Esophagus muscularis mucosa (tissue), 4 donors: ENCODE measurements at regions of chr7 and their contacts with region 1.

Region 1: DNA sequence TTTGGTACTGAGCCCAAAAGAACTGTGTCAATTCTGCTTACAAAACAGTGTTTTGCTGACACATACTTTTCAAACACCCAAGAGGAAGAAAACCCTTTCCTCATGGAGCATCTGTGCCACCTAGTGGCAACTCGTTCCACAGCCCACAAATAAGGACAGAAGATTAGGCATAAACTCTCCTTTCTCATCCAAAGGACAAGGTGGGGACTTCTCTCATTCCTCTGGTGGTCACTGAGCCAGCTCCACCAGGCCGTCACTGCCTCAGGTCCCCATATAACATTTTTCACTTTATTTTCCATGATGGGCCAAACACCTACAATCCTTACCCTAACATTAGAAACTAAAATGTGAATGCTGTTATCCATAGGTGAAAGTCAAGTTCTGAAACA is 76.9 kb downstream of the RNF216 start:
- DNase-seq: peak; percentile 95
- H3K4me3 ChIP-seq: no peak overlapping the region
- H3K27ac ChIP-seq: peak overlapping the region; percentile 91 to 96 (median 92)
- H3K4me1 ChIP-seq: peaks cover 48 to 52% (median 50%) of the 10 kb centered on the region in 4 donors
- H3K27me3 ChIP-seq: no peaks in the 10 kb centered on the region
- CTCF ChIP-seq: peak in 2 of 3 experiments; percentile 93 to 96
- EP300 ChIP-seq: no peak
- POLR2A ChIP-seq: no peak

Region 2: DNA sequence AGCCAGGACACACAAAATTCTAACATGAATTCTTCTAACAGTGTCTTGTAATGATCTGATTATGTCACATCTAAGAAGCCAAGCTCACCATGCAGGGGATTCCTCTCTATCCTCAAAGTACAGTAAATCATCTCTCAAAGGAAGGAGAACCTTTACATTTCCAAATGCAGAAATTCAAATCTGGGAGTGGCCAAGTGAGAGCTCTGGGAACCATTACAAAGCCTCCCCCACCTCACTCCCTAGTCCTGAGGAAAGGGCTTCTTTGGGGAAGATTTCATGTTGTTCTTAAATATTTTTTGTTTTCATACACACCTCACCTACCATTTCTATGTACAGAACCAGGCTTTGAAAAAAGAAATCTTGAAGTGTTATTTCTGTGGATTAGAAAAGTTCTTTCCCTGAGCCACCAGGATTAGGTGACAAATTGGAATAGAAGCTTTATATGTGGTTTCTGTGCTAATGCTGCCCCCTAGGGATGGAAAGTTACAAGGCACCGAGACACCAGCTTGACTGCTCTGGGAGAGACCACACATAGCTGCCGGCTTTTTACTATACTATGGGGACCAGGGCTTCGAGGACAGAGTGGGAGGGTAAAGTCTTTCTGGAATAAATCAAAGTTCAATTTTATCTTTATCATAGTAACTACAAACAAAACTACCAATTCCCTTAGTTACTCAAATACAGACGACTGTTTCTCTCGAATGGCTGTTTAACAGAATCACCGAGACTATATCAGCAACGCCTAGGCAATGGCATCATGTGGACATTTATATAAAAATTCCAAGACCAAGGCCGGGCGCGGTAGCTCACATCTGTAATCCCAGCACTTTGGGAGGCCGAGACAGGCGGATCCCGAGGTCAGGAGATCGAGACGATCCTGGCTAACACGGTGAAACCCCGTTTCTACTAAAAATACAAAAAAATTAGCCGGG is 39.2 kb before region 1 on chr7:
- intact Hi-C with region 1: loop called (anchors 5 kb)
- DNase-seq: peak; percentile 96
- H3K4me3 ChIP-seq: no peak overlapping the region
- H3K27ac ChIP-seq: peak overlapping the region; percentile 29 to 96 (median 74)
- H3K4me1 ChIP-seq: peaks cover 15 to 87% (median 67%) of the 10 kb centered on the region in 4 donors
- H3K27me3 ChIP-seq: no peaks in the 10 kb centered on the region
- CTCF ChIP-seq: peak; percentile 83 to 91 (median 90)
- EP300 ChIP-seq: no peak
- POLR2A ChIP-seq: no peak